Calu3 (cell line): ENCODE measurements at regions of chr7 and their contacts with region 1.

Region 1: GRCh38 chr7:123635551-123636359 is 19.9 kb upstream of the LMOD2 start:
- DNase-seq: no peak
- H3K4me3 Mint-ChIP-seq: no peak overlapping the region
- H3K27ac Mint-ChIP-seq: no peak overlapping the region
- H3K4me1 Mint-ChIP-seq: peaks cover 8% of the 10 kb centered on the region
- H3K27me3 Mint-ChIP-seq: no peaks in the 10 kb centered on the region
- CTCF ChIP-seq: peak; percentile 35

Region 2: GRCh38 chr7:123865517-123866117 is 229.9 kb after region 1 on chr7:
- CTCF ChIA-PET with region 1: interaction called, 3 read pairs
- intact Hi-C with region 1: loop called (anchors 2 kb)
- DNase-seq: peak; percentile 69
- H3K4me3 Mint-ChIP-seq: no peak overlapping the region
- H3K27ac Mint-ChIP-seq: no peak overlapping the region
- H3K4me1 Mint-ChIP-seq: peaks cover 29% of the 10 kb centered on the region
- H3K27me3 Mint-ChIP-seq: peaks cover 15% of the 10 kb centered on the region
- CTCF ChIP-seq: peak; percentile 59

Region 3: GRCh38 chr7:124152859-124153692 is 517.3 kb after region 1 on chr7:
- CTCF ChIA-PET with region 1: no interaction called
- intact Hi-C with region 1: loop called (anchors 1 kb)
- DNase-seq: peak; percentile 41
- H3K4me3 Mint-ChIP-seq: no peak overlapping the region
- H3K27ac Mint-ChIP-seq: no peak overlapping the region
- H3K4me1 Mint-ChIP-seq: no peaks in the 10 kb centered on the region
- H3K27me3 Mint-ChIP-seq: no peaks in the 10 kb centered on the region
- CTCF ChIP-seq: peak; percentile 56